ENCODE measurements at regions of chr16 and their contacts with region 1.

Region 1: DNA sequence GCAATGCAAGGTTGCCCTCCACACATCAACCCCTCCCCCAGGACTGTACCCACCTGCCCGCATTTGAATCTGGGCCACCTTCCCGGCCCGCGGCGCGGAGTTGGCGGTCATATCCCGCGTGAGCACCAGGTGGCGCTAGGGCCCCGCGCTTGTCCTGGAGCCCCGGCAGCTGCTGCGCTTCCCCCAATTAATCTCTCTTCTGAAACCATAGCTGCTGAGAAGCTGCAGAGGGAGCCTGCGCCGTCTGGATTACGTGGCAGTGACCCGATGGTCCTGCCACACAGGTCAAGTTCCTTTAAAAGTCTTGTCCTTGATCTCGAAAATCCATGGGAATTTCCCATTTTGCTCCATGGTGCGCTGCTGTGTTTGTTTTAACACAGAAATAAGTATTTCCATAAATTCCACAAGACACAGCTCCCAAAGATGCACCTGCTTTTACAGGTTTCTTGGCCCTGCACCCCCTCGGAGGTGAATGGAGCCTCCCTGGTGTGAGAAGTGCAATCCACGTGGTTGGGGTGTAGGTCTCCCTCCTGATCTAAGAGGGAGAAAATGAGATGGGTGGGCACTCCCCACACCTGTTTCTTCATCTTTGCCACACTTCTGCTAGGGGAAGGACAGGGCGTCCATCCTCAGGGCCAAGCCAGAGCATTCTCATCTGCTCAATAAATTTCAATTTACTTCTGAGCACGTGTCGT is 22.1 kb downstream of the COX4I1 start:
- DNase-seq: peak; percentile 88
- ATAC-seq: peak; percentile 93 to 95
- H3K4me3 ChIP-seq: no peak overlapping the region
- H3K27ac ChIP-seq: no peak overlapping the region
- H3K4me1 ChIP-seq: peaks cover 8% of the 10 kb centered on the region
- H3K27me3 ChIP-seq: no peaks in the 10 kb centered on the region
- CTCF ChIP-seq: peak; percentile 99

Region 2: DNA sequence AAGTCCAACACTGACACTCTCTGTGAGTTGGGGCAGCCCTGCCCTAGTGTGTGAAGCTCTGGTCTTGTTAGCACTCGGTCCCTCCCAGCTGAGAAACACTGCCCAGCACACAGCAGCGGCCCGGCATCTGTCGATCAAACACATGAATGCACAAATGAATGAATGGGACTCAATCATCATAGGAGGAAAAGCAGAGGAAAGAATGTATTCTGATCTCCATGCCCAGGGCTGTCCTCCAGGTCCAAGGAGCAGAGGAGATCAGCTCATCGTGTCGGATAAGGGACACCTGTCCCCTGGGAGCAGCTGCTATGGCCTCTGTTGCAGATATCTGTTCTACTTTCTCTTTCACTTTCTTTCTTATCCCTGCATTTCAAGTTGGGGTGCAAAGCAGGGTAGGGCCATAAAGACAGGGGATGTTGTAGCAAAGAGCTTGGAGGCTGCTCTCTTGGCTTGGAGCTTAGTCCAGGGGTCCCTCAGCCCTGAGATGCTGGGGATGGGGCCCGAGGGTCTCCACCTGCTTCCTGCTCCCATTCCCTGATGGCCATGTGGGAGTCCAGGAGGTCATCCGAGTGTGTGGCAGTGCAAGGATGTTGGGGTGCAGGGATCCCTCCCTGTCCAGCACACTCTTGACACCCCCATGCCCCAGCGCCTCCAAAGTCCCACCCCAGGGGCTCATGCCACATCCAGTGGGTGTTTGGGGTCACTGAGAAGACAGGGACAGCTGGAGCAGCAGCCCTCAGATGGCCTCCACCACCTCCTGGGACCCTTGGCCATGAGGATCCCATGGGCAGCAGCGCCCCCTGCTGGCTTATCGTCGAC is 165.6 kb after region 1 on chr16:
- intact Hi-C with region 1: loop called (anchors 10 kb)
- DNase-seq: no peak
- ATAC-seq: peak; percentile 31 to 55
- H3K4me3 ChIP-seq: no peak overlapping the region
- H3K27ac ChIP-seq: no peak overlapping the region
- H3K4me1 ChIP-seq: peaks cover 36% of the 10 kb centered on the region
- H3K27me3 ChIP-seq: peaks cover 18% of the 10 kb centered on the region
- CTCF ChIP-seq: peak; percentile 57

Region 3: DNA sequence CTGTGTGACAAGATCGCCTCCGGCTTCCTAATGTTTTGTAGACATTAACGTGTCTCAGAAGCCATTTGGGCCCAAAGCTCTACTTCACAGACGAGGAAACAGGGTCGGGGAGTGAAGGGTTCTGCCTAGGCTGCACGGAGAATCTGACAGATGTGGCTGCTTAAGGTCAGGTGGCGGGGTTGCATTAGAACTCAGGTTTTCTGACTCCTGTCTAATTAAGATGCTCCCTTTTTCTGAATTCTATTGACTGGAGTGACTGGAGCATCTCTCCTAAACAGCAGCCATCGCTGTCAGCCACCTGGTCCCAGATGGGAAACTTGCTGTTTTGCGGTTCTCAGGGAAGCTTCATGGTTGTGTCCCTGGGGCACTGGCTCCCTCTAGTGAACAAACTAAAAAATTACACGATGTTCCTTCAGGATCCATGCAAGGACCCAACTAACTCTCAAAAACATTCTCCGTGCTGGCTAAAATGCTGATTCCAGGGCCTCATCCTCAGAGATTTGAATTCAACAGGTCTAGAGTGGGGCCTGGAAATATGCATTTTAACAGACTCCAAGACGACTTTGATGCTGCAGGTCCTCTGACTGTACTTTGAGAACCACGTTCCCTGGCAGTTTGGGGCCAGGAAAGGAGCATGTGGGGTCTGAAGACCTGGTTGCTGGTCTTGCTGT is 194.7 kb after region 1 on chr16:
- intact Hi-C with region 1: loop called (anchors 10 kb)
- DNase-seq: no peak
- ATAC-seq: peak; percentile 54 to 71
- H3K4me3 ChIP-seq: no peak overlapping the region
- H3K27ac ChIP-seq: no peak overlapping the region
- H3K4me1 ChIP-seq: peaks cover 6% of the 10 kb centered on the region
- H3K27me3 ChIP-seq: peaks cover 21% of the 10 kb centered on the region
- CTCF ChIP-seq: peak; percentile 73

Region 4: GRCh38 chr16:86181526-86181925 is 359.9 kb after region 1 on chr16:
- intact Hi-C with region 1: no loop called
- DNase-seq: no peak
- ATAC-seq: peak in 1 of 2 donors; percentile 9
- H3K4me3 ChIP-seq: no peak overlapping the region
- H3K27ac ChIP-seq: no peak overlapping the region
- H3K4me1 ChIP-seq: no peaks in the 10 kb centered on the region
- H3K27me3 ChIP-seq: no peaks in the 10 kb centered on the region
- CTCF ChIP-seq: no peak

Measured in lower lobe of right lung (tissue), 2 donors.